GM10248 (cell line): ENCODE measurements at regions of chr12 and their contacts with region 1.

Region 1: DNA sequence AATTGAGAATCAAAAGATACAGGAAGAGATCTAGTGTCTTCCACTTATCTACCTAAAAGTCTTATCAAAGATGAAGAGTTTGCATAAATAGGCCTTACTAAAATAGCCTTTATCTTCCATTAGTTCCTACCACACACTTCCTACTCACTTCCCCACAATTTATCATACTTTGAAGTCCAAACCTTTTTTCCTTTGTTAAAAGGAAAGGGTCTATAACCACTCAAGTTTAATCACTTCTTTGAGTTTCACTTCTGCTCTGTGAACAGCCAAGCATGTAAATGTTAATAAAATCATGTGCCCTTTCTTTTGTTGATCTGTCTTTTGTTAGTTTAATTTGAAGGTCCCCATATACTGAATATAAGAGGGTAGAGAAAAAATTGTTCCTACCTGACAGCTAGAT is 114.5 kb downstream of the PHLDA1 start:
- DNase-seq: no peak
- CTCF ChIP-seq: no peak

Region 2: GRCh38 chr12:75933101-75933500 is 16.0 kb after region 1 on chr12:
- CTCF ChIA-PET with region 1: interaction called, 19 read pairs
- POLR2A ChIA-PET with region 1: no interaction called
- DNase-seq: no peak
- CTCF ChIP-seq: no peak